A549 (cell line): ENCODE measurements at regions of chr17 and their contacts with region 1.

Region 1: GRCh38 chr17:67221062-67221998 is 23.7 kb downstream of the HELZ start:
- DNase-seq: peak; percentile 57 to 69
- ATAC-seq: peak; percentile 86 to 93
- H3K4me3 ChIP-seq: no peak overlapping the region
- H3K27ac ChIP-seq: no peak overlapping the region
- H3K4me1 ChIP-seq: peaks cover 8% of the 10 kb centered on the region
- CTCF ChIP-seq: peak; percentile 85
- EP300 ChIP-seq: no peak
- POLR2A ChIP-seq: no peak
- RAD21 ChIP-seq: peak; percentile 63 to 64

Region 2: DNA sequence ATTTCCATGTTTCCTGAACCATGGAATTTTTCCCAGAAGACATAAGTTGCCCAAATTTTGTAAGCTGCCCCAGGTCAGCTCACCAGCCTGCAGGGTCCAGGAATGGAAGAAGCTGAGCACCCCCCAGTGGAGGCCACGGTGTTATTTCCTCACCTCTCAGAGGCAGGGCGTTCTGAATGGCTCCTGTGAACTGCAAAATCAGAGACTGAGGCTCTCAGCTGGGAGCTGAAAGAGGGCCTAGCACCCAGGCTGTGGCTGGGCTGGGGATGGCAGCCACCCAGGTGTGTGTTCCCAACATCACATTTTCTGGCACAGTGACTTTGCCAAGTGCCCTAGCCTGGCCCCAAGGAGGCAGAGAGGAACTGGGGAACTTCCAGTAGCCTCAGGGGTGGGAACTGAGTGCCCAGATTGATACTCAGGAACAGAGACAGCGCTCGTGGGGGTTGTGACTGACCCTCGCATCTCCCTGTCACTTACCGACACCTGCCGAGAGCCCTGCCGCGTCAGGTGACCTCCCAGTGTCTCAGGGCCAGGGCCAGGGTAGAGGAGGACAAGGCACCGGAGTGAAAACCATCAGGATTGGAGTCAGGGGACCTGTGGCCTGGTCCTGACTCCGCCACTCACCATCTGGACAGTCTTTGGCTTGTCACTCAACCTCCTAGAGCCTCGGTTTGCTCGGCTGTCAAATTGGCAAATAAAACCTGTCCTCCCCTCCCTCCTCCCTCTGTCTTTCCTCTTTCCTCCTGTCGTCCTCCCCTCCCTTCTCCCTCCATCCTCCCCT is 245.5 kb before region 1 on chr17:
- CTCF ChIA-PET with region 1: no interaction called
- POLR2A ChIA-PET with region 1: no interaction called
- DNase-seq: peak; percentile 60 to 70
- ATAC-seq: peak; percentile 54 to 84; a peak in 5 of 6 replicates
- H3K4me3 ChIP-seq: no peak overlapping the region
- H3K27ac ChIP-seq: peak overlapping the region in 1 of 2 experiments; percentile 34; a peak in 3 of 6 replicates
- H3K4me1 ChIP-seq: peaks cover 14% of the 10 kb centered on the region
- CTCF ChIP-seq: peak; percentile 53
- EP300 ChIP-seq: no peak
- POLR2A ChIP-seq: no peak
- RAD21 ChIP-seq: peak; percentile 68 to 82

Region 3: GRCh38 chr17:67082107-67082506 is 139.2 kb before region 1 on chr17:
- CTCF ChIA-PET with region 1: no interaction called
- POLR2A ChIA-PET with region 1: no interaction called
- DNase-seq: no peak
- ATAC-seq: no peak
- H3K4me3 ChIP-seq: no peak overlapping the region
- H3K27ac ChIP-seq: no peak overlapping the region
- H3K4me1 ChIP-seq: no peaks in the 10 kb centered on the region
- CTCF ChIP-seq: no peak
- EP300 ChIP-seq: no peak
- POLR2A ChIP-seq: no peak
- RAD21 ChIP-seq: peak in 1 of 2 experiments; percentile 9; a peak in 1 of 5 replicates

Region 4: DNA sequence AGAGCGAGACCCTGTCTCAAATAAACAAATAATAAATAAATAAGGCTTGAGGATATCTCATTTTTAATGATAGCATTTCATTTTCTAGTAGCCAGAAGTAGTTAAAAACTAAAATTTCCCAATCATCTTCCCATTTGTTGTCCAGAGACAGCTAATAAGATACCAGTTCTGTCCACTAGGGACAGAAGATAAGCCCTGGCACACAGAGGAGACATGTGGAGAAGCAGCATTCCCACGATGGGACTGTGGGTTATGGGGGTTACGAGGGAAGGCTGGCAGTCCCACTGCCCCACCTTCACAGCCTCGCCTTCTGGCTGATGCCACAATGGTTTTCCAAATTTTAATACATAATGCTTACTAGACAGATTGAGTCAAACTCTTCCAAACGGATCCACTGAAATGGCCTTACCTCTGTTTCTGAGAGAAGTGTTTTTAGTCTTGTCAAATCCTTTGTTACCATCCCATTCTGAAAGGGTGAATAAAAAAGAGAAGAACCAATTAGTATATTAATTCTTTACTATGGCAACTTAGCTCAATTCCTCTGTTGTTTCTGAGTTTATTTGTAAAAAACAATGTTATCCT is 20.5 kb before region 1 on chr17:
- CTCF ChIA-PET with region 1: interaction called, 25 read pairs
- POLR2A ChIA-PET with region 1: no interaction called
- DNase-seq: peak; percentile 42 to 58
- ATAC-seq: peak; percentile 85 to 89; a peak in 5 of 6 replicates
- H3K4me3 ChIP-seq: no peak overlapping the region
- H3K27ac ChIP-seq: no peak overlapping the region
- H3K4me1 ChIP-seq: no peaks in the 10 kb centered on the region
- CTCF ChIP-seq: peak; percentile 33
- EP300 ChIP-seq: no peak
- POLR2A ChIP-seq: no peak
- RAD21 ChIP-seq: no peak

Region 5: GRCh38 chr17:67232441-67232840 is 11.1 kb after region 1 on chr17:
- CTCF ChIA-PET with region 1: interaction called, 36 read pairs
- POLR2A ChIA-PET with region 1: no interaction called
- DNase-seq: no peak
- ATAC-seq: no peak
- H3K4me3 ChIP-seq: no peak overlapping the region
- H3K27ac ChIP-seq: no peak overlapping the region
- H3K4me1 ChIP-seq: no peaks in the 10 kb centered on the region
- CTCF ChIP-seq: no peak
- EP300 ChIP-seq: no peak
- POLR2A ChIP-seq: no peak
- RAD21 ChIP-seq: no peak

Region 6: GRCh38 chr17:67239597-67239996 is 18.3 kb after region 1 on chr17:
- CTCF ChIA-PET with region 1: interaction called, 36 read pairs
- POLR2A ChIA-PET with region 1: no interaction called
- DNase-seq: no peak
- ATAC-seq: no peak
- H3K4me3 ChIP-seq: no peak overlapping the region
- H3K27ac ChIP-seq: no peak overlapping the region
- H3K4me1 ChIP-seq: peaks cover 18% of the 10 kb centered on the region
- CTCF ChIP-seq: no peak
- EP300 ChIP-seq: no peak
- POLR2A ChIP-seq: no peak
- RAD21 ChIP-seq: no peak

Region 7: GRCh38 chr17:67272312-67273050 is 51.2 kb after region 1 on chr17:
- CTCF ChIA-PET with region 1: interaction called, 13 read pairs
- POLR2A ChIA-PET with region 1: interaction called, 3 read pairs
- DNase-seq: peak; percentile 61 to 70
- ATAC-seq: peak; percentile 90 to 95
- H3K4me3 ChIP-seq: no peak overlapping the region
- H3K27ac ChIP-seq: no peak overlapping the region
- H3K4me1 ChIP-seq: no peaks in the 10 kb centered on the region
- CTCF ChIP-seq: peak; percentile 44
- EP300 ChIP-seq: no peak
- POLR2A ChIP-seq: no peak
- RAD21 ChIP-seq: peak in 1 of 2 experiments; percentile 40; a peak in 2 of 5 replicates

Region 8: DNA sequence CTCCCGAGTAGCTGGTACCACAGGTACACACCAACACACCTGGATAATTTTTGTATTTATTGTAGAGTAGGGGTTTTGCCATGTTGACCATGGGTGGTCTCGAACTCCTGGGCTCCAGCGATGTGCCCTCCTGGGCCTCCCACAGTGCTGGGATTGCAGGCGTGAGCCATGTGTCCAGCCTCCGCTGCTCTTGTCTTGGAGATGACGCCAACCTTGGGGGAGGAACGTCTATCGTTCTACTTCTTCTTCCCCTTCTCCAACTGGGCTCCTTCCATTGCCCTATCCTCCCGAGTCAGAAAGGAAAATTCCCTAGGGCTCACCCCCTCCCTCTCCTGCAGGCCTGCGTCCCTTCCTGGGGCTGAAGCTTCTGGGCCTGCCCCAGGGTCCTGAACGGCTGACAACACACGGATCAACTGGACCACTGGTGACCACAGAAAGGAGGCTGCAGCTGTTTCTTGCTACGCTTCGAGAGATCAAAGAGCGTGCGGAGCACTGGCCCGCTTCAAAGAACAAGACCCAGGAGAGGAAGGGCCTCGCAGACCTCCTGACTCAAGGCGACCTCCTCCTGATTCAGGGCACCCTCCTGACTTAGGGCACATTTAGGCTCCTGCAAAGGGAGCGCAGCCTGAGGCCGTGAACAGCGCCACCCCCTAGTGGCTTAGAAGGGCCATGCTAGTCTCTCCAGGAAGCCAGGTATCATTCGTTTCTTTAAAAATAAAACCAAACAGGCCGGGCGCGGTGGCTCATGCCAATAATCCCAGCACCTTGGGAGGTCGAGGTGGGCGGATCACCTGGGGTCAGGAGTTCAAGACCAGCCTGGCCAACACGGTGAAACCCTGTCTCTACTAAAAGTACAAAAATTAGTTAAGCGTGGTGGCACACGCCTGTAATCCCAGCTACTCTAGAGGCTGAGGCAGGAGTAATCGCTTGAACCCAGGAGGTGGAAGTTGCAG is 72.2 kb after region 1 on chr17:
- CTCF ChIA-PET with region 1: interaction called, 70 read pairs
- POLR2A ChIA-PET with region 1: no interaction called
- DNase-seq: peak; percentile 74 to 79
- ATAC-seq: peak; percentile 95 to 97
- H3K4me3 ChIP-seq: no peak overlapping the region
- H3K27ac ChIP-seq: peak overlapping the region in 1 of 2 experiments; percentile 51; a peak in 1 of 6 replicates
- H3K4me1 ChIP-seq: 0 out of 3 replicates have a peak, but pooled peaks cover 3% of the 10 kb centered on the region
- CTCF ChIP-seq: peak; percentile 70; the same call in 2 of the 3 replicates
- EP300 ChIP-seq: no peak
- POLR2A ChIP-seq: no peak
- RAD21 ChIP-seq: peak; percentile 69 to 80

Region 9: DNA sequence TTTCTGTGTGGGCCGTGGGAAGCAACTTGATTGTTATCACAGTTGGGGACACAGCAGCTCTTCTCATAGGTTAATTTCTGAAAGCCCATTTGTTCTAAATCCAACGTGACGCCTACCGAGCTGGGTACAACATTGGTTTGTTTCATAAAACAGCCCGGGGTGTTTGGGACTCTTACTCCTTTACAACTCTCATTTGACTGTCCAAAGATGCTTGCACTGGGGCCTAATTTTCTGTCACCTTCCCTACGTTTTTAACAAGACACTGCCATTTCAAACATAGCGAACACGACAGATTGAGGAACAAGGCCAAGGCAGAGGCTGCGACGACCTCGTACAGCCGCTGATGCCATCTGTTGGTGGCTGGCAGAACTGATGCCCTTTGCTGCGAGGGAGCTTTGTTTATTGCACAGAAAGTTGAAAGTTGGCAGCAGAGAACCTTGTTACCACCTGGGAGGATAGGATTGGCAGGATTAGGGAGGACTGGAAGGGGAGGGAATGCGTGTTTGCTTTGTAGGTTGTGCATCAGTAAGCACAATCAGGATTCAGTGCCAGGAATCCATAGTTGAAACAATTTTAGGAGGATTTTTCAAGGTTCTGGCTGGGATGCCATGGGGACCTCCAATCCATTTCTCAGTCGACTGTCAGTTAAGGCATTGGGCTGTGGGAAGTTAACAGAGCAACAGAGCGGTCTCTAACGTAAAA is 254.1 kb after region 1 on chr17:
- CTCF ChIA-PET with region 1: no interaction called
- POLR2A ChIA-PET with region 1: no interaction called
- DNase-seq: peak; percentile 82 to 85
- ATAC-seq: peak; percentile 93 to 96
- H3K4me3 ChIP-seq: no peak overlapping the region
- H3K27ac ChIP-seq: no peak overlapping the region
- H3K4me1 ChIP-seq: no peaks in the 10 kb centered on the region
- CTCF ChIP-seq: peak; percentile 92
- EP300 ChIP-seq: no peak
- POLR2A ChIP-seq: no peak
- RAD21 ChIP-seq: peak; percentile 93 to 95